Ascending aorta (tissue), 2 donors: ENCODE measurements at regions of chr6 and their contacts with region 1.

Region 1: DNA sequence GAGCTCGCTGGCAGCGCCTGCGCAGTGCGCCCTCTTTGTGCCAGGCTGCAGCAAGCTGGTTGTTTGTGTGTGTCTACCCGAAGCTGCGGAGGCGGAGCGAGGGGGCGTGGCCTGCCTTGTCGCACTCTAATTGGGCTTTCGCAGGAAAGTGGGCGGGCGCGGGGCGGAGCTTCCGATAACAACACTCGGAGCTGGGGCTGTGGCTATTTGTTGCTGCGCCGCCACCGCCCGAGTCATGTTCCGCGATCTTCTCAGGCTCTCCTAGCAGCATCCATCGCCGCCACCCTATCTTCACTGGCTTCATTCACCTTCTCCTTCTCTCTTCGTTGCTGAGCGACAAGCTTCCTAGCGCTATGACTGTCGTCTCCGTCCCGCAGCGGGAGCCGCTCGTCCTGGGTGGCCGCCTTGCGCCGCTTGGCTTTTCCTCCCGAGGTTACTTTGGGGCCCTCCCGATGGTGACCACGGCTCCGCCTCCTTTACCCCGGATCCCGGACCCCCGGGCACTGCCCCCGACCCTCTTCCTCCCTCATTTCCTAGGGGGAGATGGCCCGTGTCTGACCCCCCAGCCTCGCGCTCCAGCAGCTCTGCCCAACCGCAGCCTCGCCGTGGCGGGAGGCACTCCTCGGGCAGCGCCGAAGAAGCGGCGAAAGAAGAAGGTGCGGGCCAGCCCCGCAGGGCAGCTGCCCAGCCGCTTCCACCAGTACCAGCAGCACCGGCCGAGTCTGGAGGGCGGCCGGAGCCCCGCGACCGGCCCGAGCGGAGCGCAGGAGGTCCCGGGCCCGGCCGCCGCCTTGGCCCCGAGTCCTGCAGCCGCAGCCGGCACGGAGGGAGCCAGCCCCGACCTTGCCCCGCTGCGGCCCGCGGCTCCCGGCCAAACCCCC is at the start of gene PNRC1:
- DNase-seq: peak; percentile 100
- H3K4me3 ChIP-seq: peak within 1 kb of the TSS; percentile 86 to 96
- H3K27ac ChIP-seq: peak within 1 kb of the TSS; percentile 98 to 100
- H3K4me1 ChIP-seq: peaks cover 0 to 21% of the 10 kb centered on the region in 2 donors
- H3K27me3 ChIP-seq: no peaks in the 10 kb centered on the region
- CTCF ChIP-seq: no peak
- total RNA-seq, gene PNRC1: 196 TPM

Region 2: DNA sequence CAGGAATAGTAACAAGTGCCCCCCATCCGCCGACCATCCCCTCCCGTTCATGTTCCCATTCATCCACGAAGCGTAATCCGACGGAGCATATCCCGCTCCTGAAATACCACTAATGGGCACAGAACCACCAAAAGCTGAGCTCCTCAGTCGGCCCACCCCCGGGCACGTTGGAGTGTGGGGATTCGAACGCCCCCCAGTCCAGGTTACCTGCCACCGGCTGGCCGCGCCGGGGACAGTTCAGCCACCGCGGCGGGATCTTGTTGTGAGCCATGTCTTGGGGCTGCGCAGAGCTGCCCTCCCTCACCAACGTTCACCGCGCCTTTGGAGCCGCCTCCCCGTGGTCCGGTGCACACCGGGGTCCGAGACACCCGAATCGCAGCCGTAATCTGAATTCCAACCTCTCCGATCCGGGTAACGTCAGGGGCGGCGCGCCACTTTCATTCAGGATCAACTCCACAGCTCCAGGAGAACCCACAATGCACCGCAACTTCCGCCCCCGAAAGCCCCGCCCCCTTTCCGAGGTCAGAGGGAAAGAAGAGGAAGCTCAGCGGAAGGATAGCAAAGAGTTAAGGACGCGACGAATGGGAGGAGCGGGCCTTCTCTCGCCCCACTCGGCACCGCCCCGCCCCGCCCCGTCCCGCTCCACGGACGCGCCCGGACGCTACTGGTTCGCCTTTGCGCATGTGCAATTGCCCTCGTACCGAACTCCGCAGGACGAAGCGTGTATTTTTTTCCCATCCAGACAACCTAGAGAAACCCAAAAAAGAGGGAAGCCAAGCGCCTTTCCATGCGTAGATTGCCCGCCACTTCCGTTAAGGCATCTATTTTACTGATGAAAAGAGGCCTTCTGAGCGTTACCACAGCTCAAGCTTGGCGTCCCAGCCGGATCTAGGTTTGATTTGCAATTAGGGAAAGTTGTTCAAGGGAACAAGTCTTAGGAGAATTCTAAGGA is 117.4 kb before region 1 on chr6 and contains the start of gene RNGTT:
- intact Hi-C with region 1: loop called (anchors 2 kb)
- DNase-seq: peak; percentile 96 to 99
- H3K4me3 ChIP-seq: peak within 1 kb of the TSS; percentile 89 to 93
- H3K27ac ChIP-seq: peak within 1 kb of the TSS; percentile 79 to 86
- H3K4me1 ChIP-seq: peaks cover 0 to 6% of the 10 kb centered on the region in 2 donors
- H3K27me3 ChIP-seq: no peaks in the 10 kb centered on the region
- CTCF ChIP-seq: no peak
- total RNA-seq, gene RNGTT: 13.4 TPM

Region 3: DNA sequence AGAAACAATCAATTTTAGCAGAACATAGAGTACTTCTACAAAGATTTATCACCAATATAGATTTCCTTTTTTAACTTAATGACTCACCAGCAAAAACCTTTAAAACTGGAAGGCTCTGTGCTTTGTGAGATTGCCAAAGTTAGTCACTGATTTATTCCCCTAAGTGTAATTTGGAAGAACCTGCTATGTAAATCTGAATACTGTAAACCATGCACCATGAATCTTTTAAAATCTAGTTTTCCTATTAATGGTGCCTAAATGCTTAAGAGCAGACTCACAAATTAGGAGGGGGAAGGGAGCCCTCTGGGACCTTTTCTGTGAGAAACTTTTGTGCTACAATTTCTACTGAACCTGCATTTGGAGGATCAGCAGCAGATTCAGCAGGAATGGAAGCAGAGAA is 58.0 kb before region 1 on chr6:
- intact Hi-C with region 1: loop called (anchors 2 kb)
- DNase-seq: peak in 1 of 2 donors; percentile 62
- H3K4me3 ChIP-seq: no peak overlapping the region
- H3K27ac ChIP-seq: peak overlapping the region; percentile 75 to 81
- H3K4me1 ChIP-seq: peaks cover 7 to 33% of the 10 kb centered on the region in 2 donors
- H3K27me3 ChIP-seq: no peaks in the 10 kb centered on the region
- CTCF ChIP-seq: no peak

Region 4: DNA sequence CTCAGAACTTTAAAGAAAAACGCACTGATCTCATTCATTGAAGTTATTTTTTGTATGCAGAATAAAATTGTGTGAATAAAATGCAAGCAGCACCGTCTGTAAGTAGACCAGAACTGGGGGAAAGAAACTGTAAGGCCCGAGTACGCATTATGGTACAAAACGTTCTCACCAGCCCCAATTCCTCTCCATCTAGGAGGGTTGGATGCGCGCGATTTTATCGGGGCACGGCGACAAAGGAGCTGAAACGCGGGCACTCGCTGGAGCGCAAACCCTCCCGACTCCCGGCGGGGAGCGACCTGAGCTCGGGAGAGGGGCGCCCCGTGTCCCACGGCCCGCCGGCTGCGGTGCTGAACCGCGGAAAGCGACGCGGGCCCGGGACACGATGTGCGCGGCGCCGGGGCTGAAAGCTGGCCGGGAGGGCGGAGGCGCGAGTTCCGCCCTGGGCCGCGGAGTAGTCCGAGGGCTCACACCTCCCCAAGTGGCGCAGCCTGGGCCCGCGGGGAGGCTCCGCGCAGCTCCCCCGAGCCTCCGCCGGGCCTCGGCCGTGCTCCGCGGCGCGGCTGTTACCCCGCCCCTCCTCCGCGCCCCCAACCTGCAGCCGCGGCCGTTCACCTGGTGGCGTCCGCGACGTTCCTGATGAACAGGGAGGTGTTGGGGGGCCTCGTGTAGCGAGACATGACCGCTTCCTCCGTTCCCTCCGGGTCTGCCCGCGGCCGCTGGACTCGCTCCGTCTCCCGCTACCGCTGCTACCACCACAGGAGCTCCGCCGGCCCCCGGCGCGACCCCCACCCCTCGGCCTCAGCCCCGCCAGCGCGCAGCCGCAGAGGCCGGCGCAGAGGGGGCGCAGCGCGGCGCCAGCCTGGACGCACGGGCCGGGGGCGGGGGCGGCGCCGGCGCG is 36.7 kb after region 1 on chr6 and contains the start of gene SRSF12:
- intact Hi-C with region 1: loop called (anchors 2 kb)
- DNase-seq: peak in 1 of 2 donors; percentile 70
- H3K4me3 ChIP-seq: peak within 1 kb of the TSS; percentile 71 to 90
- H3K27ac ChIP-seq: peak within 1 kb of the TSS; percentile 38 to 56
- H3K4me1 ChIP-seq: peaks cover 0 to 7% of the 10 kb centered on the region in 2 donors
- H3K27me3 ChIP-seq: no peaks in the 10 kb centered on the region
- CTCF ChIP-seq: no peak
- total RNA-seq, gene SRSF12: 0.53 TPM

Region 5: GRCh38 chr6:89161326-89162046 is 80.7 kb after region 1 on chr6:
- intact Hi-C with region 1: loop called (anchors 5 kb)
- DNase-seq: no peak
- H3K4me3 ChIP-seq: peak overlapping the region in 1 of 2 donors; percentile 47
- H3K27ac ChIP-seq: peak overlapping the region; percentile 88 to 94
- H3K4me1 ChIP-seq: peaks cover 5 to 19% of the 10 kb centered on the region in 2 donors
- H3K27me3 ChIP-seq: no peaks in the 10 kb centered on the region
- CTCF ChIP-seq: no peak

Region 6: GRCh38 chr6:89242574-89243330 is 162.0 kb after region 1 on chr6:
- intact Hi-C with region 1: no loop called
- DNase-seq: no peak
- H3K4me3 ChIP-seq: no peak overlapping the region
- H3K27ac ChIP-seq: no peak overlapping the region
- H3K4me1 ChIP-seq: no peaks in the 10 kb centered on the region
- H3K27me3 ChIP-seq: no peaks in the 10 kb centered on the region
- CTCF ChIP-seq: peak; percentile 34 to 66 (median 47)

Region 7: GRCh38 chr6:89829591-89830385 is 749.0 kb after region 1 on chr6 and contains the start of gene CASP8AP2:
- intact Hi-C with region 1: loop called (anchors 10 kb)
- DNase-seq: peak; percentile 90 to 98
- H3K4me3 ChIP-seq: peak within 1 kb of the TSS; percentile 71 to 73
- H3K27ac ChIP-seq: peak within 1 kb of the TSS; percentile 85 to 89
- H3K4me1 ChIP-seq: peaks cover 0 to 11% of the 10 kb centered on the region in 2 donors
- H3K27me3 ChIP-seq: no peaks in the 10 kb centered on the region
- CTCF ChIP-seq: no peak
- total RNA-seq, gene CASP8AP2: 6.7 TPM